PC-3 (cell line): ENCODE measurements at regions of chr6 and their contacts with region 1.

Region 1: GRCh38 chr6:90559931-90560330 is 26.9 kb downstream of the MAP3K7 start:
- DNase-seq: no peak
- ATAC-seq: peak; percentile 56
- H3K4me3 ChIP-seq: no peak overlapping the region
- H3K27ac ChIP-seq: no peak overlapping the region
- H3K4me1 ChIP-seq: no peaks in the 10 kb centered on the region
- H3K27me3 ChIP-seq: no peaks in the 10 kb centered on the region
- CTCF ChIP-seq: no peak

Region 2: DNA sequence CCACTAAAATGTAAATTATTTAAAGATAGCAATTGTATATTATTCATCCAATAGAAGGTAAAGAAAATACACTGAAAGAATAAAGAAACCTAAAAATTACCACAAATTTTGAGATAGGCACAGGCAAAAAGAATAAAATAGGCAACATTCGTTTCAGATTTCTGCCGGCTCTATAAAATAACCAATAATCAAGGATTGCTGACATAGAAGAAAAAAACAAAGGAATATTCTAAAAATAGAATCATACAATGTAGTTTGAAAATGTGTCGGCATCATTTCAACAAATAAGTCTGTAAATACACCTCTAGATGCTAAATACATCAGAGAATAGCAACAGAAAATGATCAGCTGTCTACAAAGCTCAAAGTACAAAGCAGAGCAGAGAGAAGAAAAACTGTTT is 1886.1 kb after region 1 on chr6:
- CTCF ChIA-PET with region 1: interaction called, 14 read pairs
- POLR2A ChIA-PET with region 1: no interaction called
- intact Hi-C with region 1: no loop called
- DNase-seq: no peak
- ATAC-seq: no peak
- H3K4me3 ChIP-seq: no peak overlapping the region
- H3K27ac ChIP-seq: no peak overlapping the region
- H3K4me1 ChIP-seq: no peaks in the 10 kb centered on the region
- H3K27me3 ChIP-seq: no peaks in the 10 kb centered on the region
- CTCF ChIP-seq: no peak